ENCODE measurements at regions of chr2 and their contacts with region 1.

Region 1: DNA sequence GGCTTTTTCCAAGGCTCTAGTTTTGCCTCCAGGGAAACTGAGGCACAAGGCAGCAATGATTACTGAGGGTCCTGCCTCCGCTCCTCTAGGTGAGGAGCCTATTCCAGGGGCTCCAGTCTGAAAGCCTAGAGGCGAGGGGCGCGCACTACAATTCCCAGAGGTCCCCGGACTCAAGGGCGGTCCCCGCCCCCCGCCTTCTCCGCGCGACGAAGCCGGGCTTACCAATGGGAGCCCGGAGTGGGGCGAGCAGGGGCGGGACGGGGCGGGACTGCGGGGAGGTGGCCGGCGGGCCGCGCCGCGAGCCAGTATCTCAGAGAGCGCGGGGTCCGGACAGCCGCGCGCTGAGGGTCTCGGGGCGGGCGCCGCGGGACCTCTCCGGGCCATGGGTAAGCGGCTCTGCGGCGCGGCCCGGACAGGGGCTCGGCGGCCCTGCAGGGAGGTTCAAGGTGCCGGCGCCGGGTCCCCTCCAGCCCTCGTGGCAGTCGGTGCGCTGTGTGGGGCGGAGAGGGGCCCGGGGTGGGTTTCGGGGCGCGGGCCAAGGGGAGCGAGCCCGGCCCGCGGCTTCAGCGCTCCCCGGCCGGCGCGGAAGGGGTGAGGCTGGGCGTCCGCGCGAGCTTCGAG is at the start of gene ARID5A:
- DNase-seq: peak; percentile 94
- H3K4me3 Mint-ChIP-seq: peak within 1 kb of the TSS; percentile 90
- H3K27ac Mint-ChIP-seq: peak within 1 kb of the TSS; percentile 97
- H3K4me1 Mint-ChIP-seq: peaks cover 68% of the 10 kb centered on the region
- H3K27me3 Mint-ChIP-seq: peaks cover 8% of the 10 kb centered on the region
- total RNA-seq, gene ARID5A: 80.0 to 86.8 TPM

Region 2: GRCh38 chr2:96320728-96321622 is 215.6 kb before region 1 on chr2:
- CTCF ChIA-PET with region 1: interaction called, 3 read pairs
- POLR2A ChIA-PET with region 1: interaction called, 16 read pairs
- DNase-seq: peak; percentile 46
- H3K4me3 Mint-ChIP-seq: peak overlapping the region; percentile 80
- H3K27ac Mint-ChIP-seq: peak overlapping the region; percentile 84
- H3K4me1 Mint-ChIP-seq: peaks cover 70% of the 10 kb centered on the region
- H3K27me3 Mint-ChIP-seq: no peaks in the 10 kb centered on the region

Region 3: DNA sequence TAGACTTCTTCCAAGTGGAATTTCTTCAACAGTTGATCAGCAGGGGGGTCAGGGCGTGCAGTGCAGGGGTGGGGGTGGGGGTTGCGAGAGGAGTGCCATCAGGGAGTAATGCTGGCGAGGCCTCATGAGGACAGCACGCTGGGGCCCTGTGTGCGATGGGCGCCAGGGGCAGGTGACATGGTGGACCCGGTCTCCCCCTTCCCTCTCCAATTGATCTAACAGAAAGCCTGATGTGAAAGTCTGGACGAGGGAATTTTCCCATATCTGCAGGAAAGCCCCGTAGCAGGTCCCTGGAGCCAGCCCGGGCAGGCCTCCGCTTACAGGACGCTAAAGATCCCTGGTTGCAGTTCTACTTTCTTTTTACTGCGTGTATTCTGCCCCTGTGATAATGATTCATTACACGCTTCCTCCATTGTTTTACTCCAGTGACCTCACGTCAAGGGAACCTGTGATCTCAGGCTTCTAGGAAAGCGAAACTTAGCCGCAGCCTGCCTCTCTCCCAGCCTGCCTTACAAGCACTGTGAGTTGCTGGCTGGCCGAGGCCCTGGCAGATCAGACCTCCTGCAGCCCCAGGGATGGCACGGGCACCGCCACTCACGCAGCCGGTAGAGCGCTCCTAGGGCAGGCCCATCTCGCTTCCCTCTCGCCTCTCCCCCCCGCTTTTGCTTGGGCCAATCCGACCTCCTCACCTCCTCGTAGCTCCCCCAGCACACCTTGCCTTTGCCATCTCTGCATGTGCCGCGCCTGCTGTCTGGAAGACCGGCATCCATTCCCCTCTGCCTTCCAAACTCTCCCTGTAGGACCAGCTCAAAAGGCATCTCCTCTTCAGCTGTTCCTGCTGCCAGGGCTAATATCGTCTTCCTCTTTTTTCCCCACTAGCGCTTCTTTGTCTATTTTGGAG is 50.6 kb before region 1 on chr2:
- CTCF ChIA-PET with region 1: no interaction called
- POLR2A ChIA-PET with region 1: interaction called, 14 read pairs
- DNase-seq: peak; percentile 92
- H3K4me3 Mint-ChIP-seq: peak overlapping the region; percentile 86
- H3K27ac Mint-ChIP-seq: peak overlapping the region; percentile 97
- H3K4me1 Mint-ChIP-seq: peaks cover 48% of the 10 kb centered on the region
- H3K27me3 Mint-ChIP-seq: peaks cover 1% of the 10 kb centered on the region

Region 4: GRCh38 chr2:96554293-96555145 is 18.0 kb after region 1 on chr2:
- CTCF ChIA-PET with region 1: interaction called, 63 read pairs
- POLR2A ChIA-PET with region 1: interaction called, 62 read pairs
- DNase-seq: peak; percentile 71
- H3K4me3 Mint-ChIP-seq: no peak overlapping the region
- H3K27ac Mint-ChIP-seq: peak overlapping the region; percentile 52
- H3K4me1 Mint-ChIP-seq: peaks cover 32% of the 10 kb centered on the region
- H3K27me3 Mint-ChIP-seq: no peaks in the 10 kb centered on the region

Region 5: DNA sequence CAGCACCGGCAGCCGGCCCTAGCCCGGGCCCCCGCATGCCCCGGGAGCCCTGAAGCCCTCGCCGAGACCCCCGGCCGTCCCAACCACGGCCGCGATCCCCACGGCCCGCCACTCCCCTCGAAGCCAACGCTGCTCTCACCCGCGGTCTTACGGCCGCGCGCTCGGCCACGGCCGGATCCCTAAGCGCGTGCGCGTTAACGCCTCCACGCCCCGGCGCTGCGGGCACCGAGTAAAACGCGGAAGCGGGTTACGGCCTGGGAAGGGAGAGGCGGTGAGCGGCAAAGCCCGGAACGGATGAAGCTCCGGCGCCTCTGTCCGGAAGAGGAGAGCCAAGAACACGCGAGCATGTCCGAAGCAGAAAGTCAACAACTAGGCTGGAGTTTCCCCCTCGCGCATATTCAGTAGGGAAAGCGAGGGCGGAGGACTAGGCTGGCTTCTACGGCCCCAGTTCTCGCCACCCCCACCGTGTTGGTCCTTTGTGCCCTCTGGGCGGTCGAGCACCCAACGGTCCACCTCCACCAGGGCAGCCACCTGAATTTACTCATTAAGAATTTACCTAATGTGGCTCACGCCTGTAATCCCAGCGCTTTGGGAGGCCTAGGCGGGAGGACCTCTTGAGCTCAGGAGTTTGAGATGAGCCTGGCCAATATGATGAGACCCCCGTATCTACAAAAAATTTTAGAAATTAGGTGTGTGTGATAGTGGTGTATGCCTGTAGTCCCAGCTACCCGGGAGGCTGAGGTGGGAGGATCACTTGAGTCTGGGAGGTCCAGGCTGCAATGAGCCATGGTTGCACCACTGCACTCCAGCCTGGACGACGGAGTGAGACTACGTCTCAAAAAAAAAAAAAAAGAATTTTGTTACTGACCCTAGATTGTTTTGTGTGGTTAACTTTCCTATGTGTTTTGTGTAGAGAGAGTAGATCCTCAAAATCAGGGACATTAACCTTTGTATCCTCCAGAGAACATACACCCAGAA is 101.9 kb after region 1 on chr2 and contains the start of gene KANSL3:
- CTCF ChIA-PET with region 1: no interaction called
- POLR2A ChIA-PET with region 1: interaction called, 26 read pairs
- DNase-seq: peak; percentile 92
- H3K4me3 Mint-ChIP-seq: peak within 1 kb of the TSS; percentile 96
- H3K27ac Mint-ChIP-seq: peak within 1 kb of the TSS; percentile 92
- H3K4me1 Mint-ChIP-seq: peaks cover 43% of the 10 kb centered on the region
- H3K27me3 Mint-ChIP-seq: peaks cover 8% of the 10 kb centered on the region
- total RNA-seq, gene KANSL3: 58.2 to 60.9 TPM

Measured in activated CD4-positive, alpha-beta memory T cell treated with anti-CD3 and anti-CD28 coated beads, Interleukin-2, amount 10 ng/mL, durations not matched to agents 7 days and 5 days (primary cell).